Activated CD4-positive, alpha-beta memory T cell treated with anti-CD3 and anti-CD28 coated beads for 36 hours (primary cell): ENCODE measurements at regions of chr2 and their contacts with region 1.

Region 1: DNA sequence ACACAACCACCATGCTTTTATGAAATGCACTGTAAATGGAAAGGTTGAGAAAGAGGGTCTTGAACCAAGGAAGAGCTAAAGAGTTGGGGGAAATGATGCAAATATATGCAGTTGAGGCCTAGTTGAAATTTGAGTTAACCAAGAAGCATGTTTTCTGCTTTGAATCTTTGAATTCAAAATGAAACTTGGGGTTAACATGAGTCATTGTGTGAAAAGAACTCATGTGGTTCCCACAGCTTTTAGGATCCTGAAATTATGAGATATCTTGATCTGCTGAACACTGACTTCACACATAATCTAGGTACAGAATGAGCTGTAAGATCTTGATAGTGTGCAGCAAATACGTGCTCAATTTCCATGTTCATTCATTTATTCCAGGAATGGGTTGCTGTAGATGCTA is 422.9 kb upstream of the TRIB2 start:
- DNase-seq: no peak
- H3K4me3 Mint-ChIP-seq: no peak overlapping the region
- H3K27ac Mint-ChIP-seq: no peak overlapping the region
- H3K4me1 Mint-ChIP-seq: peaks cover 43% of the 10 kb centered on the region
- H3K27me3 Mint-ChIP-seq: peaks cover 20% of the 10 kb centered on the region

Region 2: GRCh38 chr2:11863513-11864328 is 430.2 kb before region 1 on chr2:
- CTCF ChIA-PET with region 1: no interaction called
- POLR2A ChIA-PET with region 1: no interaction called
- intact Hi-C with region 1: loop called (anchors 10 kb)
- DNase-seq: peak; percentile 76
- H3K4me3 Mint-ChIP-seq: peak overlapping the region; percentile 25
- H3K27ac Mint-ChIP-seq: no peak overlapping the region
- H3K4me1 Mint-ChIP-seq: peaks cover 41% of the 10 kb centered on the region
- H3K27me3 Mint-ChIP-seq: no peaks in the 10 kb centered on the region

Region 3: DNA sequence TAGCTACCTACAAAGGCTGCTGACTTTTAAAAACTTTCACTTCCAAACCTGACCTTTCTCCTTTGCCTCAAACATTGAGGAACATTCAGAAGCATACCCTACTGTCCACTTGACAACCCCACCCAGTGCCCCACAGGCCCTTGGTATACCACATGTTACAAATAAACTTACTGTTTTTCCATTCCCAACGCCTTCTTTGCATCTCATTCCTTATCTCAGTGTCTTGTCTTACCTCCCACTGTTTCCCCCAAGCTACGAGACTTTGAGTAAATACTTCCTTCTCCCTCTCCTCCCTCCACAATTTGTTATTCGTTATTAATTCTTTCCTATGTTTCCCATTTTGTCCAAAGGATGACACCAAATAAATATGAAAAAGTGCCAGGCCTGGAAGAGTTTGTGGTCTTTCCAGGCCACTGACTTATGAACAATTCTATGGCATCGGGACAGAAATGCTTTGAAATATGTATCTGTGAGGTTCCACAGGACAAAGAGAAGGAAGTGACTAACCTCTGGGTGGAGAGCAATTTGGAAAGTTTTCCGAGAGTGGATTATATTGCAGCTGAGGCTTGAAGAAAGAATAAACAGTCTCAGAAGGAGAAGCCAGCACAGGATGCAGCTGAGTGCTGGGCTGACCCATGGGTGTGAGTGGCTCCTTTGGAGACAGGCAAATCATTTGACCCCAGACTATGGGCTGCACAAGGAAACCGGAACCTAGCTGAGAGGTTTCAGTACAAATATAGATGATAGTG is 138.4 kb before region 1 on chr2:
- CTCF ChIA-PET with region 1: no interaction called
- POLR2A ChIA-PET with region 1: no interaction called
- intact Hi-C with region 1: no loop called
- DNase-seq: no peak
- H3K4me3 Mint-ChIP-seq: no peak overlapping the region
- H3K27ac Mint-ChIP-seq: no peak overlapping the region
- H3K4me1 Mint-ChIP-seq: no peaks in the 10 kb centered on the region
- H3K27me3 Mint-ChIP-seq: peaks cover under 1% of the 10 kb centered on the region

Region 4: GRCh38 chr2:12176623-12177454 is 117.0 kb before region 1 on chr2:
- CTCF ChIA-PET with region 1: no interaction called
- POLR2A ChIA-PET with region 1: no interaction called
- intact Hi-C with region 1: loop called (anchors 5 kb)
- DNase-seq: peak; percentile 48
- H3K4me3 Mint-ChIP-seq: no peak overlapping the region
- H3K27ac Mint-ChIP-seq: no peak overlapping the region
- H3K4me1 Mint-ChIP-seq: peaks cover 36% of the 10 kb centered on the region
- H3K27me3 Mint-ChIP-seq: no peaks in the 10 kb centered on the region

Region 5: GRCh38 chr2:12456293-12457151 is 162.6 kb after region 1 on chr2:
- CTCF ChIA-PET with region 1: no interaction called
- POLR2A ChIA-PET with region 1: no interaction called
- intact Hi-C with region 1: loop called (anchors 2 kb)
- DNase-seq: peak; percentile 79
- H3K4me3 Mint-ChIP-seq: peak overlapping the region; percentile 70
- H3K27ac Mint-ChIP-seq: peak overlapping the region; percentile 91
- H3K4me1 Mint-ChIP-seq: peaks cover 36% of the 10 kb centered on the region
- H3K27me3 Mint-ChIP-seq: no peaks in the 10 kb centered on the region

Region 6: DNA sequence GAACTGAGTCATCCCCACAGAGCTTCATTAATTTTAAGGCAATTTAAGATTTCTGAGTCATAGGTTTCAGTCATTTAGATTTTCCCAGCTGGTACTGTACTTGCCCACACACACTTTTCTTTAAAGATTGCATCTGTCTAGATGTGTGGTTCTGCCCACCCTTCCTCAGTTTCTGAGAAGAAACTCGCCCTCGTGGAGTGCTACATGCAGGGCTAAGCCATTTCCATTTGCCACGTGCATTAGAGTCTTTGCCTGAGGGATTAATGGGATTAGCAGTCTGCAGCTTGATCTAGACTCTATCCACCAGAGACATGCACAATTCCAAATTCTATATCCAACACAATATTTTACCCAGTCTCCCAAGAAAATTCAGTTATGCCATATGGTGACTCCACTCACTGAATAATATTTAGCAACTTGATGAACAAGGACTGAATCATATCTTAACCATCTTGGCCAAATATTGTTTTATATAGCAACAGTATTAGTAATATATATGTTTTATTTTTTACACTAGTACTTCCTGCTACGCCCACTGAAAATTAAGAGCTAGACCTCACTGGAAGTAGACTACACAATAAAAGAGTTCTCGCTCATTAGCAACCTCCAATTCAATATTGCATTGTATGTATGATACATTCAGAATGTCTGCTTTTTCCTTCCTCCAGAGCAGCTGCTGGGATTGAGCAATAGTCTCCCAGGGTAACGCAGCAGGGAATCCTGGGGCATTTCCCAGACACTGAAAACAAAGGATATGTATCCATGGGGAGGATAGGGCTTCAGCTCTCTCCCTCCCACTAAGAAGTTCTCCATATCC is 408.6 kb after region 1 on chr2:
- CTCF ChIA-PET with region 1: no interaction called
- POLR2A ChIA-PET with region 1: no interaction called
- intact Hi-C with region 1: loop called (anchors 1 kb)
- DNase-seq: no peak
- H3K4me3 Mint-ChIP-seq: peak overlapping the region; percentile 21
- H3K27ac Mint-ChIP-seq: no peak overlapping the region
- H3K4me1 Mint-ChIP-seq: peaks cover 42% of the 10 kb centered on the region
- H3K27me3 Mint-ChIP-seq: peaks cover 3% of the 10 kb centered on the region